ENCODE measurements at regions of chr2 and their contacts with region 1.

Region 1: GRCh38 chr2:88691339-88692183 is at the start of gene RPIA:
- DNase-seq: peak; percentile 99
- ATAC-seq: peak; percentile 96
- H3K4me3 ChIP-seq: peak within 1 kb of the TSS; percentile 87 to 89 (median 88)
- H3K27ac ChIP-seq: peak within 1 kb of the TSS; percentile 82
- H3K4me1 ChIP-seq: peaks cover 50% of the 10 kb centered on the region
- H3K27me3 ChIP-seq: no peaks in the 10 kb centered on the region; a peak in 1 of 5 replicates
- CTCF ChIP-seq: peak; percentile 83
- EP300 ChIP-seq: peak; percentile 29 to 75; a peak in 3 of 4 replicates
- POLR2A ChIP-seq: peak; percentile 81 to 97
- RAD21 ChIP-seq: peak; percentile 88
- total RNA-seq, gene RPIA: 23.9 and 31.6 TPM in 2 replicates

Region 2: GRCh38 chr2:88669371-88670214 is 22.0 kb before region 1 on chr2:
- CTCF ChIA-PET with region 1: no interaction called
- POLR2A ChIA-PET with region 1: interaction called, 5 read pairs
- in situ Hi-C with region 1: no loop called
- intact Hi-C with region 1: loop called (anchors 1 kb)
- DNase-seq: peak; percentile 58
- ATAC-seq: peak; percentile 84
- H3K4me3 ChIP-seq: no peak overlapping the region
- H3K27ac ChIP-seq: no peak overlapping the region
- H3K4me1 ChIP-seq: peaks cover 13% of the 10 kb centered on the region
- H3K27me3 ChIP-seq: no peaks in the 10 kb centered on the region
- CTCF ChIP-seq: peak; percentile 80
- EP300 ChIP-seq: no peak
- POLR2A ChIP-seq: no peak
- RAD21 ChIP-seq: peak; percentile 59; the same call in 1 of the 2 replicates

Region 3: DNA sequence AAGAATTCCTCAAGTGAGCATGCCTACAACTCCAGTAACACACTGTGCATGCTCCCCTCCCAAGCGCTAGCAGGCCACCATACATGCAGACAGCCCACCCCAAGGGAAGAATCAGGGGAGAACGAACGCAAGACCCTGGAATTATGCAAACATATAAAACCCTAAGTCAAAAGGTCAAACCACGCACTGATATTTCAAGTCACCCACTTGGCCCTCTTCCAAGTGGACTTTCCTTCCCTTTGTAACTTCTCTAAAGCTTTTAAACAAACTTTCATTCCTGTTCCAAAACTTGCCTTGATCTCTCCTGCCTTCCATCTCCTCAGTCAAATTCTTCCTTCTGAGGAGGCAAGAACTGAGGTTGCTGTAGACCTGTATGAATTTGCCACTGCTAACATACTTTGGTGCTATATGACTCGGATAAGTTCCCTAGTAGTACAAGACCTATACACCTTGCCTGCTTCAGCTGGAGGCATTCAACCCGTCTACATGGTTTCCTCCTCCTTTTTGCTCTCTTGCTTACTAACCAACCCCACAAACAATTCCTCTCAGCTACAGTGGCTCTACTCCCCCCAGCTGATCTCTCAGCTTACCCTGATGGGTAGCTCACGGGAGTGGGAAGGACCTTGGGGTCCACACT is 11.2 kb before region 1 on chr2:
- CTCF ChIA-PET with region 1: no interaction called
- POLR2A ChIA-PET with region 1: interaction called, 24 read pairs
- in situ Hi-C with region 1: no loop called
- intact Hi-C with region 1: no loop called
- DNase-seq: peak; percentile 62
- ATAC-seq: peak; percentile 81
- H3K4me3 ChIP-seq: peak overlapping the region; percentile 23 to 43 (median 25); a peak in 4 of 6 replicates
- H3K27ac ChIP-seq: peak overlapping the region; percentile 41
- H3K4me1 ChIP-seq: peaks cover 21% of the 10 kb centered on the region
- H3K27me3 ChIP-seq: no peaks in the 10 kb centered on the region
- CTCF ChIP-seq: no peak
- EP300 ChIP-seq: no peak
- POLR2A ChIP-seq: no peak
- RAD21 ChIP-seq: no peak

Region 4: GRCh38 chr2:88707003-88707402 is 15.4 kb after region 1 on chr2:
- CTCF ChIA-PET with region 1: no interaction called
- POLR2A ChIA-PET with region 1: interaction called, 12 read pairs
- in situ Hi-C with region 1: no loop called
- intact Hi-C with region 1: loop called (anchors 1 kb)
- DNase-seq: peak; percentile 80
- ATAC-seq: peak; percentile 71
- H3K4me3 ChIP-seq: no peak overlapping the region; a peak in 1 of 6 replicates
- H3K27ac ChIP-seq: no peak overlapping the region
- H3K4me1 ChIP-seq: peaks cover 31% of the 10 kb centered on the region
- H3K27me3 ChIP-seq: no peaks in the 10 kb centered on the region
- CTCF ChIP-seq: no peak
- EP300 ChIP-seq: peak in 1 of 2 experiments; percentile 48; a peak in 1 of 4 replicates
- POLR2A ChIP-seq: no peak
- RAD21 ChIP-seq: no peak

Region 5: GRCh38 chr2:88735858-88736257 is 44.3 kb after region 1 on chr2:
- CTCF ChIA-PET with region 1: no interaction called
- POLR2A ChIA-PET with region 1: no interaction called
- in situ Hi-C with region 1: no loop called
- intact Hi-C with region 1: no loop called
- DNase-seq: no peak
- ATAC-seq: no peak
- H3K4me3 ChIP-seq: no peak overlapping the region
- H3K27ac ChIP-seq: no peak overlapping the region
- H3K4me1 ChIP-seq: peaks cover 9% of the 10 kb centered on the region
- H3K27me3 ChIP-seq: no peaks in the 10 kb centered on the region
- CTCF ChIP-seq: no peak
- EP300 ChIP-seq: no peak
- POLR2A ChIP-seq: no peak
- RAD21 ChIP-seq: no peak

Region 6: DNA sequence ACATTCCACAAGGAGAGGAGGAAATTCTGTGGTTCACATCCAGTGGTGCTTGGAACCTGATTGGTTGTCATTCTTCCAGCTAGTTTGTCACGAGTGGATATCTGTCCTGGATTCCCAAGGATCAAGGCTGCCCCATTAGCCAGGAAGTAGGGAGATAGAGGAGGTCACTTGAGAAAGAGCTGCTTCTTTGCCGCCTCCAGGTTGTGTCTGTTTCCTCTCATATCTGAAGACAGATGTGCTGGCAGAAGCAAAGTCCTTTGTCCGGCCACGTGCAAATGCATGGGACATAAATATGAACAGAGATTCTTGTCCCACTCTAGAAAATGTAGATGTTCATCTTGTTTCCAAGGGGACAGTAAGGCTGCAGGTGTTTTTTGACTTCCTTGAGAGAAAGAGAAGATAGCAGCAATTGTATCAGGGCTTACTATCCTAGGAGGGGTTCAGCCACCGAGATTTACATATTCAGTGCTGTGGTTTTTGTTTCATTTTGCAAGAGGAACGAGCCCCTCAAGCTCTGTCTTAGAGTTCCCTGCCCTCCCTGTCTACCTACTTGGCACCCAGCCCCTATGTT is 174.3 kb after region 1 on chr2:
- CTCF ChIA-PET with region 1: no interaction called
- POLR2A ChIA-PET with region 1: no interaction called
- in situ Hi-C with region 1: no loop called
- intact Hi-C with region 1: no loop called
- DNase-seq: no peak
- ATAC-seq: no peak
- H3K4me3 ChIP-seq: no peak overlapping the region
- H3K27ac ChIP-seq: no peak overlapping the region
- H3K4me1 ChIP-seq: no peaks in the 10 kb centered on the region
- H3K27me3 ChIP-seq: peaks cover 0 to 20% of the 10 kb centered on the region in 2 experiments; a peak in 2 of 5 replicates
- CTCF ChIP-seq: no peak
- EP300 ChIP-seq: no peak
- POLR2A ChIP-seq: no peak
- RAD21 ChIP-seq: no peak